ENCODE measurements at regions of chr3 and their contacts with region 1.

Region 1: GRCh38 chr3:106423321-106424225 is 554.8 kb upstream of the CBLB start:
- DNase-seq: no peak
- H3K4me3 Mint-ChIP-seq: peak overlapping the region; percentile 45
- H3K27ac Mint-ChIP-seq: peak overlapping the region; percentile 90
- H3K4me1 Mint-ChIP-seq: peaks cover 50% of the 10 kb centered on the region
- H3K27me3 Mint-ChIP-seq: no peaks in the 10 kb centered on the region

Region 2: DNA sequence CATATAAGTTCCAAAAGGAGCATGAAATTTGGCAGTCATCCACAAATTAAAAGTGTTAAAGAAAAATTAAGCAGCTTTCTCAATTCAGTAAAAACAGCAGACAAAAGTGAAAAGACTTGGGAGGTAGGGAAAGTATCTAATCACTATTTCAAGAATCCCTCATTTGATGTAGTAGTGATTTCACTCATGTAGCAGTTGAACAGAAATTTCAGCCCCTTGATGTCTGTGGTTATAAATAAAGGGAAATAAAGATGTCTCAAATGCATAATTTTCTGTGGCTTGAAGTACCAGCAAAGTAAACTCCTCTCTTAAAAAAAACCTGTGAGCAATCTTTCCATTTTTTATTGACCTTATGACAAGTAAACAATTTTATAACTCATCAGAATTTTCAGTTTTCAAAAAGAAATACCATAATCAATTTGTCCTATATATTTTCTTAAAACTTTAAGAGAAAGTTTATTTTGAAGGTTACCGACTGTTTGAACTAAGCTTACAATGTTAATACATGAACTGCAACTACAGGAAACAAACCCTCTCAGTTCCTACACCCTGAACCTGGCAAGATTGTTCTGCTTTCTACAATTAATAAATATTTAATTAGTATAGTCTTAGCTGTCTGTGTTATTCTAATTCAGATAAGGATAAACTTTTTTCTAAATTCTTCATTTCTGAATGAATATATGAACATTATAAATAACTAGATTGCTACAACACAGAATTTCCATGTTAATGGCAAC is 649.0 kb before region 1 on chr3:
- intact Hi-C with region 1: loop called (anchors 1 kb)
- DNase-seq: no peak
- H3K4me3 Mint-ChIP-seq: no peak overlapping the region
- H3K27ac Mint-ChIP-seq: peak overlapping the region; percentile 76
- H3K4me1 Mint-ChIP-seq: peaks cover 71% of the 10 kb centered on the region
- H3K27me3 Mint-ChIP-seq: no peaks in the 10 kb centered on the region

Region 3: GRCh38 chr3:105876780-105877327 is 546.7 kb before region 1 on chr3:
- intact Hi-C with region 1: loop called (anchors 1 kb)
- DNase-seq: no peak
- H3K4me3 Mint-ChIP-seq: peak overlapping the region; percentile 64
- H3K27ac Mint-ChIP-seq: peak overlapping the region; percentile 80
- H3K4me1 Mint-ChIP-seq: peaks cover 35% of the 10 kb centered on the region
- H3K27me3 Mint-ChIP-seq: no peaks in the 10 kb centered on the region

Region 4: DNA sequence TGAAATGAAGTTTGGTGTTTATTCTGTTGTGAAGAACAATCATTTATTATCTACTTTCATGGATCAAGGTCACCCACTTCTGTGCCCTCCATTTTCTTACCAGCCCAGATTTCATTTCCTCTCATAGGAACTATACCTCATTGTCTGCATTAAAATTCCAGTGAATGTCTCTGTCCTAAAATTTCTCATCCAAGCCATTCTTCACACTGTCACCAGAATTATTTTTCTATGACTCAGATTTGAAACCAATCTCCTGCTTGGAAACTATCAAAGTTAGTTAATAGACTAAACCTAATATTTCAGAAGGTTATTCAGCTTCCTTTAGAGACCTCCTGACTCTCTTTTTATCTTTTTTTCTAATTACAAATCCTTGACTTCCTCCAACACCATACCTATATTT is 190.6 kb before region 1 on chr3:
- intact Hi-C with region 1: loop called (anchors 1 kb)
- DNase-seq: no peak
- H3K4me3 Mint-ChIP-seq: no peak overlapping the region
- H3K27ac Mint-ChIP-seq: peak overlapping the region; percentile 46
- H3K4me1 Mint-ChIP-seq: peaks cover 46% of the 10 kb centered on the region
- H3K27me3 Mint-ChIP-seq: no peaks in the 10 kb centered on the region

Region 5: GRCh38 chr3:106457286-106458180 is 34.0 kb after region 1 on chr3:
- intact Hi-C with region 1: loop called (anchors 5 kb)
- DNase-seq: peak; percentile 13
- H3K4me3 Mint-ChIP-seq: no peak overlapping the region
- H3K27ac Mint-ChIP-seq: peak overlapping the region; percentile 49
- H3K4me1 Mint-ChIP-seq: peaks cover 23% of the 10 kb centered on the region
- H3K27me3 Mint-ChIP-seq: no peaks in the 10 kb centered on the region

Region 6: DNA sequence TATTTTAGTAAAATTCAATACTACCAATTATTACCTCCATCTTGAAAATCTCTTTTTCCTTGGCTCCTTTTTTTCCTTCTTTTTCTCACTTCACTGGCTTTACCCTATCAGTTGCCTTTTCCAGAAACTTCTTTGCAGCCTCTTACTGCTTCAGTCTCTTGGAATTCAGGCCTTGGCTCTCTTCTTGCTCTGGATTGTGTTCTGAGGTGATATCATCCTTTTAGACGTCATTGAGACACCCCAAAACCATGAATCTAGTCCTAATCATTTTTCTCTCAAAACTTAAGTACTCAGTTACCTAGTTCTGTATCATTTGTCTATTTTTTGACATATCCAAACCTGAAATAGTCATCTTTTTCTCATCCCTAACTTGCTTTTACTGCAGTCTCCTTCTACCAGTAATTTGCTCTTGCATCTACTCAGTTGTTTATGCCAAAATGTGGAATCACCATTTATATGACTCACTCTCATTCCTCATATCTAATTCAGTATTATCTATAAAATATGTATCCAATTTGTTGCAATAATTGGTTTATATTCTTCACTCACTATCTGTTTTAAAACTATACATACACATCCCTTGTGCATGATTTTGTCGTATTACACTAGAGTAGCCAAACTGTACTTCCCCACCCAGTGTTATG is 250.5 kb after region 1 on chr3:
- intact Hi-C with region 1: no loop called
- DNase-seq: no peak
- H3K4me3 Mint-ChIP-seq: no peak overlapping the region
- H3K27ac Mint-ChIP-seq: no peak overlapping the region
- H3K4me1 Mint-ChIP-seq: no peaks in the 10 kb centered on the region
- H3K27me3 Mint-ChIP-seq: no peaks in the 10 kb centered on the region

Measured in activated T-helper 1 cell treated with anti-CD3 and anti-CD28 coated beads, Interleukin-12 subunit alpha, Interleukin-12 subunit beta, Interleukin-2, Interleukin-4 antibody, amounts not matched to agents 30 ng/mL and 10 ng/mL and 1 ng/mL, durations not matched to agents 14 hours and 24 hours and 36 hours (primary cell).